ENCODE measurements at regions of chr4 and their contacts with region 1.

Region 1: GRCh38 chr4:140851032-140851636 is 94.9 kb upstream of the TBC1D9 start:
- DNase-seq: no peak
- ATAC-seq: peak in 3 of 4 donors; percentile 54 to 76 (median 63)
- H3K4me3 ChIP-seq: no peak overlapping the region
- H3K27ac ChIP-seq: no peak overlapping the region
- H3K4me1 ChIP-seq: no peaks in the 10 kb centered on the region
- H3K27me3 ChIP-seq: no peaks in the 10 kb centered on the region
- CTCF ChIP-seq: peak; percentile 80

Region 2: GRCh38 chr4:140359562-140360427 is 491.3 kb before region 1 on chr4:
- intact Hi-C with region 1: loop called in 1 of 2 experiments (anchors 5 kb)
- DNase-seq: peak; percentile 58 to 68
- ATAC-seq: peak; percentile 68 to 91 (median 80)
- H3K4me3 ChIP-seq: no peak overlapping the region
- H3K27ac ChIP-seq: no peak overlapping the region
- H3K4me1 ChIP-seq: no peaks in the 10 kb centered on the region
- H3K27me3 ChIP-seq: no peaks in the 10 kb centered on the region
- CTCF ChIP-seq: peak; percentile 74

Region 3: GRCh38 chr4:140523857-140524742 is 327.0 kb before region 1 on chr4 and contains the start of gene ELMOD2:
- intact Hi-C with region 1: loop called in 1 of 2 experiments (anchors 5 kb)
- DNase-seq: peak; percentile 99 to 100
- ATAC-seq: peak; percentile 100
- H3K4me3 ChIP-seq: peak within 1 kb of the TSS; percentile 100
- H3K27ac ChIP-seq: peak within 1 kb of the TSS; percentile 92
- H3K4me1 ChIP-seq: peaks cover 9% of the 10 kb centered on the region
- H3K27me3 ChIP-seq: no peaks in the 10 kb centered on the region
- CTCF ChIP-seq: peak; percentile 90
- total RNA-seq, gene ELMOD2: 6.9 to 10.0 (median 8.7) TPM

Measured in psoas muscle (tissue), 8 donors.